Activated B cell treated with CpG ODN at 0.5 μM for 24 hours (primary cell): ENCODE measurements at regions of chrX and their contacts with region 1.

Region 1: DNA sequence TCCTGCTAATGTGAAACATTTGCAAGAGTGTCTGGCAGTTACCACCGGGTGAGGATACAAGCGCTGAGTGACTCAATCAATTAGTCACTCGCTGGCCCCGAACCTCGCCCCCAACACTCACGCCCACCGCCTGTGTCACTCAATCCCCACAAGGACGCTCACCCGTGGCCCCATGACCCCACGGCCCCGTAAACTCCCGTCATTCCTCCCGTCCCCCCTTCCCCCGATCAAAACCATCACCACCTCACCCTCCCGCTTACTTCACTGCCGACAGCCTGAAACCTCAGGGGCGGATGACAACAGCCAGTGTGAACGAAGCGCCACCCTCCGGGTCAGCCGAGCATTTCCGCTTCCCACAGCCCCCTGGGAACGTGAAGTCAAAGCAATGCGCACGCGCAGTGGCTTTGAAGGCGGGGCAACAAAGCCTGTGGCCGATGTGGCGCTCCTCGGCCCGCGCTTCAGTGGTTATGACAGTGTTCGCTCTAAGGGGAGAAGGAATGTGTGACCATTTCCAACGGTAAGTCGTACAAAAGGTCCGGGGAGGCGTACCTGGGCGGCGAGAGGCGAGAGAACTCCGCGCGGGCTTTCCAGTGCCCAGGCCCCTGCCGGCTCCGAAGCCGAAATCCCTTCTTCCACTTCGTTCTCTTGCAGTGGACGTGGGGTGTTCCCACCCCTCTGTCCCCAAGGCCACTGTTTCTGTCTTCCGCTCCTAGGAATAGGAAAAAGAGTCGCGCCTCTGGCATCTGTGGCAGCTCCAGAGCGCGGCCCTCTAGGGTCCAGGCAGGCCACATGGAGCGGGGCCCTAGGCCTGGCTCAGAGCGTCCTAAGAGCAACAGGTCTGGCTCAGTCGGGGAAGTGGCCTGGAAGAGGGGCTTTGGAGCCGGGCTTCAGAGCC is at the start of gene ZNF674:
- DNase-seq: peak; percentile 86
- ATAC-seq: peak; percentile 92
- H3K4me3 Mint-ChIP-seq: peak within 1 kb of the TSS; percentile 93
- H3K27ac Mint-ChIP-seq: peak within 1 kb of the TSS; percentile 94
- H3K4me1 Mint-ChIP-seq: peaks cover 30% of the 10 kb centered on the region
- H3K27me3 Mint-ChIP-seq: no peaks in the 10 kb centered on the region
- CTCF ChIP-seq: no peak
- total RNA-seq, gene ZNF674: 1.6 and 2.3 TPM in 2 replicates

Region 2: DNA sequence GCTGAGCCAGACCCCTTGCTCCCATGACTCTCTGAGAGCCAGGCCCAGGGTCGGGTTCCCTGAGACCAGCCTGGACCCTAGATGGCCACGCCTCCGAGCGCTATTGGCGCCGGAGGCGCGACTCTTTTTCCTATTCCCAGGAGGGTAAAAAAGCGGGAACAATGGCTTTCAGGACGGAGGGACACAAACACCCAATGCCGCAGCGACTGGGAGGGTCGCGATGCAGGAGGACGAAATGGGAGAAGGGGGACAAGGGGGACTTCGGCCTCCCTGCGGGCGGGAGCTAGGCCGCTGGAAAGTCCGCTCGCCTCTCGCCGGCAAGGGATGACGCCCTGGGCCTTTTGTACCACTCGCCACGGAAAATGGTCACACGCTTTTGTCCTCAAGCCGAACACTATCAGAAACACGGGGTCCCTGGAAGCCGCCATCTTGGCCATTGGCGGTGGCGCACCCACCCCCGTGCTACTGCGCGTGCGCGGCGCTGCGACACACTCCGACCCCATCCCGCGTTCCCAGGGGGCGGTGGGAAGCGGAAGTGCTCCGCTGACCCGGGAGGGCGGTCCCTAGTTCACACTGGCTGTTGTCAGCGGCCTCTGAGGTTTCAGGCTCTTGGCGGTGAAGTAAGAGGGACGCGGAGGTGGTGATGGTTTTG is 98.5 kb before region 1 on chrX:
- CTCF ChIA-PET with region 1: no interaction called
- POLR2A ChIA-PET with region 1: no interaction called
- intact Hi-C with region 1: loop called (anchors 1 kb)
- DNase-seq: peak; percentile 81
- ATAC-seq: peak; percentile 98
- H3K4me3 Mint-ChIP-seq: peak overlapping the region; percentile 85
- H3K27ac Mint-ChIP-seq: peak overlapping the region; percentile 85
- H3K4me1 Mint-ChIP-seq: peaks cover 11% of the 10 kb centered on the region
- H3K27me3 Mint-ChIP-seq: no peaks in the 10 kb centered on the region
- CTCF ChIP-seq: no peak

Region 3: GRCh38 chrX:46561824-46562657 is 16.7 kb after region 1 on chrX:
- CTCF ChIA-PET with region 1: no interaction called
- POLR2A ChIA-PET with region 1: interaction called, 3 read pairs
- intact Hi-C with region 1: loop called (anchors 1 kb)
- DNase-seq: no peak
- ATAC-seq: peak; percentile 96
- H3K4me3 Mint-ChIP-seq: peak overlapping the region; percentile 39
- H3K27ac Mint-ChIP-seq: peak overlapping the region; percentile 70
- H3K4me1 Mint-ChIP-seq: peaks cover 17% of the 10 kb centered on the region
- H3K27me3 Mint-ChIP-seq: peaks cover 12% of the 10 kb centered on the region
- CTCF ChIP-seq: no peak